Activated T-helper 1 cell treated with anti-CD3 and anti-CD28 coated beads, Interleukin-12 subunit alpha, Interleukin-12 subunit beta, Interleukin-2, Interleukin-4 antibody, amounts not matched to agents 30 ng/mL and 10 ng/mL and 1 ng/mL, durations not matched to agents 14 hours and 24 hours and 36 hours (primary cell): ENCODE measurements at regions of chr3 and their contacts with region 1.

Region 1: DNA sequence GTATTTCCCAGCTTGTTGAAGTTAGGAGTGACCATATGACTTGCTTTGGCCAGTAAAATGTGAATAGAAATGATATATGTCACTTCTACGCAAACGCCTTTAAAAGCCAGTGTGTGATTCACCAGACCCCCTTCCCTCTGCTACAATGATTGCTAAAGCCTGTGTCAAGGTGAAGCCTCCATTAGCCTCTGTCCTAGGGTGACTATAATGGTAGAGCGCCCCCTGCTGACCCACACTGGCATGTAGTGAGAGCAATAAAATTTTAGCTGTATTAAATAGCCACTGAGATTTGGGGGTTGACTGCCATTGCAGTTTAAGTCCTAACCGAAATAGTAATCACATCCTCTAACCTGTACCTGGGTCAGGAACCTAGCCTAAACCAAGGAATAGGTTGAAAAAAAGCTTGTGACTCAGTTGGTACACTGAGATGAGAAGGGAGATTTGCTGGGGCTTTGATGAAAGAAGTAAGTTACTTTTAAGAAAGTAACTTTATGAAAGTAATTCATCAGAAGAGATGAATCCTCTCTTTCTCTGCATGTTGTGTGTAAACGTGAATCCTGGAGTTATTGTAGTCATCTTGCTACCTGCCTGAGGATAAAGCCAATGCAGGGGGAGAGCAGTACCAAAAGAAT is 52.6 kb downstream of the GTF2E1 start:
- DNase-seq: peak; percentile 63
- H3K4me3 Mint-ChIP-seq: no peak overlapping the region
- H3K27ac Mint-ChIP-seq: no peak overlapping the region
- H3K4me1 Mint-ChIP-seq: no peaks in the 10 kb centered on the region
- H3K27me3 Mint-ChIP-seq: peaks cover 6% of the 10 kb centered on the region

Region 2: GRCh38 chr3:120245386-120245785 is 549.7 kb before region 1 on chr3:
- intact Hi-C with region 1: loop called (anchors 1 kb)
- DNase-seq: no peak
- H3K4me3 Mint-ChIP-seq: no peak overlapping the region
- H3K27ac Mint-ChIP-seq: no peak overlapping the region
- H3K4me1 Mint-ChIP-seq: no peaks in the 10 kb centered on the region
- H3K27me3 Mint-ChIP-seq: peaks cover 26% of the 10 kb centered on the region

Region 3: GRCh38 chr3:120432150-120432860 is 362.8 kb before region 1 on chr3:
- intact Hi-C with region 1: no loop called
- DNase-seq: no peak
- H3K4me3 Mint-ChIP-seq: no peak overlapping the region
- H3K27ac Mint-ChIP-seq: no peak overlapping the region
- H3K4me1 Mint-ChIP-seq: no peaks in the 10 kb centered on the region
- H3K27me3 Mint-ChIP-seq: peaks cover 8% of the 10 kb centered on the region

Region 4: GRCh38 chr3:120442975-120443517 is 352.1 kb before region 1 on chr3:
- intact Hi-C with region 1: no loop called
- DNase-seq: no peak
- H3K4me3 Mint-ChIP-seq: no peak overlapping the region
- H3K27ac Mint-ChIP-seq: no peak overlapping the region
- H3K4me1 Mint-ChIP-seq: no peaks in the 10 kb centered on the region
- H3K27me3 Mint-ChIP-seq: peaks cover 17% of the 10 kb centered on the region

Region 5: GRCh38 chr3:120596116-120596852 is 198.8 kb before region 1 on chr3 and contains the start of gene NDUFB4:
- intact Hi-C with region 1: loop called (anchors 1 kb)
- DNase-seq: peak; percentile 94
- H3K4me3 Mint-ChIP-seq: peak within 1 kb of the TSS; percentile 91
- H3K27ac Mint-ChIP-seq: peak within 1 kb of the TSS; percentile 96
- H3K4me1 Mint-ChIP-seq: peaks cover 15% of the 10 kb centered on the region
- H3K27me3 Mint-ChIP-seq: no peaks in the 10 kb centered on the region
- total RNA-seq, gene NDUFB4: 107 and 108 TPM in 2 replicates

Region 6: GRCh38 chr3:120742198-120742849 is 52.8 kb before region 1 on chr3 and contains the starts of genes GTF2E1 and RABL3:
- intact Hi-C with region 1: loop called (anchors 1 kb)
- DNase-seq: peak; percentile 95
- H3K4me3 Mint-ChIP-seq: peak within 1 kb of the TSS; percentile 84
- H3K27ac Mint-ChIP-seq: peak within 1 kb of the TSS; percentile 89
- H3K4me1 Mint-ChIP-seq: peaks cover 22% of the 10 kb centered on the region
- H3K27me3 Mint-ChIP-seq: no peaks in the 10 kb centered on the region
- total RNA-seq, gene GTF2E1: 25.3 and 29.2 TPM in 2 replicates
- total RNA-seq, gene RABL3: 24.3 and 25.6 TPM in 2 replicates